Activated B cell treated with CpG ODN at 0.5 μM for 24 hours (primary cell): ENCODE measurements at regions of chr2 and their contacts with region 1.

Region 1: GRCh38 chr2:176157499-176158185 is 535 bp downstream of the HOXD3 start:
- DNase-seq: no peak
- ATAC-seq: no peak
- H3K4me3 Mint-ChIP-seq: no peak overlapping the region
- H3K27ac Mint-ChIP-seq: no peak overlapping the region
- H3K4me1 Mint-ChIP-seq: peaks cover 3% of the 10 kb centered on the region
- H3K27me3 Mint-ChIP-seq: peaks cover 58% of the 10 kb centered on the region
- CTCF ChIP-seq: no peak

Region 2: GRCh38 chr2:175929850-175930249 is 227.8 kb before region 1 on chr2:
- CTCF ChIA-PET with region 1: no interaction called
- POLR2A ChIA-PET with region 1: no interaction called
- intact Hi-C with region 1: no loop called
- DNase-seq: no peak
- ATAC-seq: no peak
- H3K4me3 Mint-ChIP-seq: no peak overlapping the region
- H3K27ac Mint-ChIP-seq: no peak overlapping the region
- H3K4me1 Mint-ChIP-seq: no peaks in the 10 kb centered on the region
- H3K27me3 Mint-ChIP-seq: no peaks in the 10 kb centered on the region
- CTCF ChIP-seq: no peak

Region 3: GRCh38 chr2:175965773-175966172 is 191.9 kb before region 1 on chr2:
- CTCF ChIA-PET with region 1: no interaction called
- POLR2A ChIA-PET with region 1: no interaction called
- intact Hi-C with region 1: no loop called
- DNase-seq: no peak
- ATAC-seq: no peak
- H3K4me3 Mint-ChIP-seq: no peak overlapping the region
- H3K27ac Mint-ChIP-seq: no peak overlapping the region
- H3K4me1 Mint-ChIP-seq: no peaks in the 10 kb centered on the region
- H3K27me3 Mint-ChIP-seq: no peaks in the 10 kb centered on the region
- CTCF ChIP-seq: no peak

Region 4: GRCh38 chr2:176079831-176080539 is 77.7 kb before region 1 on chr2:
- CTCF ChIA-PET with region 1: no interaction called
- POLR2A ChIA-PET with region 1: no interaction called
- intact Hi-C with region 1: loop called (anchors 2 kb)
- DNase-seq: no peak
- ATAC-seq: no peak
- H3K4me3 Mint-ChIP-seq: peak overlapping the region; percentile 53
- H3K27ac Mint-ChIP-seq: peak overlapping the region; percentile 66
- H3K4me1 Mint-ChIP-seq: peaks cover 7% of the 10 kb centered on the region
- H3K27me3 Mint-ChIP-seq: peaks cover 65% of the 10 kb centered on the region
- CTCF ChIP-seq: no peak

Region 5: GRCh38 chr2:176096986-176097819 is 60.4 kb before region 1 on chr2:
- CTCF ChIA-PET with region 1: no interaction called
- POLR2A ChIA-PET with region 1: no interaction called
- intact Hi-C with region 1: no loop called
- DNase-seq: peak; percentile 42
- ATAC-seq: peak; percentile 68
- H3K4me3 Mint-ChIP-seq: peak overlapping the region; percentile 76
- H3K27ac Mint-ChIP-seq: no peak overlapping the region
- H3K4me1 Mint-ChIP-seq: peaks cover 19% of the 10 kb centered on the region
- H3K27me3 Mint-ChIP-seq: peaks cover 77% of the 10 kb centered on the region
- CTCF ChIP-seq: no peak

Region 6: DNA sequence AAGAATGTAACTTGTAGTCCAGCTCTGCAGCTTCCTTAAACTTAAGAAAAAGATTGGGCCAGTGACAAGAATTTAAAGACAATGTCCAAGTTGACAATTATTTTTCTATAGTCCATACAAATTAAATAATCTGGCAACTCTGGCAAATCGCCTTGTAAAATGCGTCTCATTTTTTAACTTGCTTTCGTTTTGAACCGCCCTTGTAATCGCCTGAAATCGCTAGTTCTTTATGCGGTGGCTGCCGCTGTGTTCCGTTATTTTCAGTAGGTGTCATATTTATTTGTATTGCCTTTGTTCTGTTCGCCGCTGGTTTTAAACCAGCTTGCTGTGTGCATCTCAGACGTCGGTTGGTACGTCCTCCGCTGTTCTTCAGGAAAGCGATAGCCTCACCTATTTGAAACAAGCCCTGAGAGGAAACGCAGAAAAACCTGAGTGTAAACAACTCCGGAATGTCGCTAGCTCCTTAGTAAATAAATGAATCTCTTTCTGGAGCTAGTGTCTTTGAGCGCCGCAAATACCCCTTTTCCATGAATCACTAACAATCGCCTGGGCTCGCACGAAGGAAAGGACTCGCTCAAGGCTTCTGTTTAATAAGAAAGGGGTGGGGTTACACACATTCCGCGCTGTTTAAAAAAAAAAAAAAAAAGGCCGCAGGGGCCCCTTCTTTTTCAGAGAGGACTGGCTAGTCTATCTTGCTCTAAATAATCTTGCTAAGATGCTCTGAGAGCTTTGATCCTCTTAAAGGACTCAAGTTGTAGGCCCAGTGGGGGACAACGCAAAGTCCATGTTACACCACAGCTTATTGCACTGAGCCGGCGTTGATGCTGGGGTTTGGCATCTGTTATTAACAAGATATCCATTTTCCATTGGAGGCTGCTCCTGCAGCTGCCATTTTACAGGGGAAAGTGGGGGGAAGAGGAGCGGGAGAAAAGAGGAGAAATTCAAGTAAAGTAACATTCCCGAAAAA is 25.2 kb before region 1 on chr2:
- CTCF ChIA-PET with region 1: no interaction called
- POLR2A ChIA-PET with region 1: no interaction called
- intact Hi-C with region 1: loop called (anchors 2 kb)
- DNase-seq: no peak
- ATAC-seq: no peak
- H3K4me3 Mint-ChIP-seq: peak overlapping the region; percentile 68
- H3K27ac Mint-ChIP-seq: no peak overlapping the region
- H3K4me1 Mint-ChIP-seq: peaks cover 40% of the 10 kb centered on the region
- H3K27me3 Mint-ChIP-seq: peaks cover 73% of the 10 kb centered on the region
- CTCF ChIP-seq: no peak